Right ventricle myocardium inferior (tissue), 1 donor: ENCODE measurements at regions of chr3 and their contacts with region 1.

Region 1: GRCh38 chr3:86774082-86774691 is 216.8 kb downstream of the VGLL3 start:
- DNase-seq: no peak
- ATAC-seq: no peak

Region 2: GRCh38 chr3:87082796-87083440 is 308.7 kb after region 1 on chr3:
- intact Hi-C with region 1: loop called (anchors 5 kb)
- DNase-seq: no peak
- ATAC-seq: peak; percentile 67

Region 3: GRCh38 chr3:87167628-87168456 is 393.7 kb after region 1 on chr3:
- intact Hi-C with region 1: loop called (anchors 5 kb)
- DNase-seq: peak; percentile 44
- ATAC-seq: no peak

Region 4: GRCh38 chr3:87719060-87719459 is 944.9 kb after region 1 on chr3:
- intact Hi-C with region 1: no loop called
- DNase-seq: no peak
- ATAC-seq: no peak